Ascending aorta (tissue), 2 donors: ENCODE measurements at regions of chr6 and their contacts with region 1.

Region 1: GRCh38 chr6:160455541-160456213 is 107.5 kb downstream of the SLC22A3 start:
- DNase-seq: peak in 1 of 2 donors; percentile 81
- H3K4me3 ChIP-seq: peak overlapping the region in 1 of 2 donors; percentile 10
- H3K27ac ChIP-seq: peak overlapping the region; percentile 32 to 51
- H3K4me1 ChIP-seq: peaks cover 0 to 8% of the 10 kb centered on the region in 2 donors
- H3K27me3 ChIP-seq: no peaks in the 10 kb centered on the region
- CTCF ChIP-seq: peak; percentile 95 to 98 (median 95)

Region 2: DNA sequence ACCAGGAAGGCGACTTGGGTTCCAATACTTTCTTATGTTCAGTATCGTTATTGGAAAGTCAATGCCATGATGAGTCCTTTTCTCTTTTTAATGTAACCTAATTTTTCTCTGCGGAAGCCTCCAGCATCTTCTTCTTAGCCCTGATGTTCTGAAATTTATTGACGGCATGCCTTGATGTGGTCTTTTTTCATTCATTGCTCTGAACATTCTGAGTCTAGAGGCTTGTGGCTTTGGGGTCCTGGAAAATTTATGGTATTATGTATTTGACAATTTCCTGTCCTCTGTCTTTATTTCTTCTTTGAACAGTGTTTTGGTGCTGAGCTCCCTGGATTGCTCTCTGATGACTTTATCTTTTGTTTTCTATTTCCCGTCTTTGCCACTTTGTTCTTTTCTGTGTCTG is 593.6 kb before region 1 on chr6:
- intact Hi-C with region 1: loop called (anchors 10 kb)
- DNase-seq: no peak
- H3K4me3 ChIP-seq: no peak overlapping the region
- H3K27ac ChIP-seq: no peak overlapping the region
- H3K4me1 ChIP-seq: no peaks in the 10 kb centered on the region
- H3K27me3 ChIP-seq: no peaks in the 10 kb centered on the region
- CTCF ChIP-seq: no peak

Region 3: GRCh38 chr6:159968440-159969203 is 487.1 kb before region 1 on chr6 and contains the start of gene IGF2R:
- intact Hi-C with region 1: loop called (anchors 5 kb)
- DNase-seq: peak; percentile 89 to 97
- H3K4me3 ChIP-seq: peak within 1 kb of the TSS; percentile 100
- H3K27ac ChIP-seq: peak within 1 kb of the TSS; percentile 86 to 90
- H3K4me1 ChIP-seq: peaks cover 0 to 15% of the 10 kb centered on the region in 2 donors
- H3K27me3 ChIP-seq: no peaks in the 10 kb centered on the region
- CTCF ChIP-seq: no peak
- total RNA-seq, gene IGF2R: 104 TPM

Region 4: DNA sequence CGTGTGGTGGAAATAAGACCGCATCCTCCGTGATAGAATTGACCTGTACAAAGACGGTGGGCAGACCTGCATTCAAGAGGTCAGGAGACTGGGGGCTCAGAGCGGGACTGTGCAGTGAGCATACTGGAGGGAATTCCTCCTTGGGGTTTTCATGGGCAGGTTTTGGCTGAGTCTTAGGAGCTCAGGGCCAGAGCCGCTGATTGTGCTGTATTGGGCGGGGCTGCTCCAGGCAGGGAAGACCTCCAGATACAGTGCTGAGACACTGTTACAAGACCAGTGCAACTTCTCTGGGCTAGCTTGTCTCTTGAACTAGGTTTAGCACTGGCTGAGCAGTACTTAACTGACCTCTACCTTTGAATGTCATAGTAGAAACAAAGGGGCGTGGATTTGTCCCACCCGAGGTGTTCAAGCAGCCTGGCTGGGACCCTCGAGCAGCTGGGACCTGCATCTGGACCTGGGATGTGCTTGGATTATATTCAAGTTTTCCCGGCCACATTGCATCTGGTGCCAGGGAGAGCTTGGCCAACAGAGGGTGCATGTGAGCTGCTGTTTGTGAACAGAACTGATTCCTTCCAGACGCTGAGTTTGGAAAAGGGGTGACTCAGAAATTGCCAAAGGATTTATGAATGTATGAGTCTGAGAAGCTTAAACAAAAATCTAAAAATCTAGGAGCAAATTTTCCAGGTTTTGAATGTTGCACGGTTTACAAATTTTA is 367.5 kb before region 1 on chr6:
- intact Hi-C with region 1: loop called (anchors 1 kb)
- DNase-seq: peak in 1 of 2 donors; percentile 89
- H3K4me3 ChIP-seq: no peak overlapping the region
- H3K27ac ChIP-seq: peak overlapping the region in 1 of 2 donors; percentile 68
- H3K4me1 ChIP-seq: peaks cover 4 to 5% of the 10 kb centered on the region in 2 donors
- H3K27me3 ChIP-seq: no peaks in the 10 kb centered on the region
- CTCF ChIP-seq: peak; percentile 75 to 82 (median 82)

Region 5: DNA sequence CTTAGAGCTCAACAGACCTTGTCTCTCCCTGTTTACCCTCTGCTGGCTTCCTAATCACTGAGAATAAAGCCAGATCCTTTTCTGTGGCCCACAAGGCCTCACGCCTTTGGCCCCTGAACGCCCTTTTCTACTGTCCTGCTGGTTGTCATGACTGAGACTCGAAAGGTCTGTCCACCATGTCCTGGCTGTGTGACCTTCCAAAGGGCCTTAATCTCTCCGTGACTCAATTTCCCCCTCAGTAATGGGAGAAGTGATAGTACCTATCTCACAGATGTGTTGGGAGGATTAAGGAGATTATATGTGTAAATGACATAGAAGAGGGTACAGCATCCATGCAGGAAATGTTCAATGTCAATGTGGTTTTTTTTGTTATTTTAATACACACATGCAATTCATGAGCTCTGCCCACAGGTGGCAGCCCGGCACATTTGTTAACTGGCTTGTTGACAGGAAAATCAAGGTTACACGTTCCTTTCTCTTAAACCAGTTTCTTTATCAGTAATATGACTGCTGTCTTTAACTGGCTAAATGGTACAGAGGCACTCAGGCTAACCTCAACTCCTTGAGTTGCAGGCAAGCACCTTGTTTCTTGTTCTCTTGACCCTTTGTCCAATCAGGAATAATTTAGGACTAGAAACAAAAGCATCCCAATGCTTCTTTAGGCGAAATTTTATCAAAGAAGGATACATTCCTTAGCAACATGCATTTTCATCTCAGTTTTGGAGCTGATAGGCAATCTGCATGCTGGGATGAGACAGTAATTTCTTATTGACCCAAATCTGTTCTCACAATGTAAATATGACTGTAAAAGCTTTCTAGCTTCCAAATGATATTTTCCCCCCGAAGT is 317.5 kb before region 1 on chr6:
- intact Hi-C with region 1: loop called (anchors 1 kb)
- DNase-seq: peak in 1 of 2 donors; percentile 71
- H3K4me3 ChIP-seq: no peak overlapping the region
- H3K27ac ChIP-seq: peak overlapping the region; percentile 90 to 91
- H3K4me1 ChIP-seq: peaks cover 18 to 34% of the 10 kb centered on the region in 2 donors
- H3K27me3 ChIP-seq: no peaks in the 10 kb centered on the region
- CTCF ChIP-seq: peak; percentile 66 to 75 (median 66)

Region 6: DNA sequence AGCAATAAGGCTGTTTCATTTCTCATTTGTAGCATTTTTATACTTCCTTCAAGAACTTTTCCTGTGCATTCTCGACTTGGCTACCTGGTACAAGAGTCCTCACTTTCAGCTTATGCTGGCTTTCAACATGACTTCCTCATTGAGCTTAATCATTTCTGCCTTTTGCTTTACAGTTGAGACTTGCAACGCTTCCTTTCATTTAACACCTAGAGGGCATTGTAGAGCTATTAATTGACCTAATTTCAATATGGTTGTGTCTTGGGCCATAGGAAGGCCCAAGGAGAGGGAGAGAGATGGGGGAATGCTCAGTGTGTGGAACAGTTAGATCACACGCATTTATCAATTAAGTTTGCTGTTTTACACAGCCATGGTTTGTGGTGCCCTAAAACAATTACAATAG is 234.3 kb before region 1 on chr6:
- intact Hi-C with region 1: loop called (anchors 2 kb)
- DNase-seq: no peak
- H3K4me3 ChIP-seq: no peak overlapping the region
- H3K27ac ChIP-seq: no peak overlapping the region
- H3K4me1 ChIP-seq: peaks cover 0 to 11% of the 10 kb centered on the region in 2 donors
- H3K27me3 ChIP-seq: no peaks in the 10 kb centered on the region
- CTCF ChIP-seq: peak in 1 of 3 experiments; percentile 9

Region 7: DNA sequence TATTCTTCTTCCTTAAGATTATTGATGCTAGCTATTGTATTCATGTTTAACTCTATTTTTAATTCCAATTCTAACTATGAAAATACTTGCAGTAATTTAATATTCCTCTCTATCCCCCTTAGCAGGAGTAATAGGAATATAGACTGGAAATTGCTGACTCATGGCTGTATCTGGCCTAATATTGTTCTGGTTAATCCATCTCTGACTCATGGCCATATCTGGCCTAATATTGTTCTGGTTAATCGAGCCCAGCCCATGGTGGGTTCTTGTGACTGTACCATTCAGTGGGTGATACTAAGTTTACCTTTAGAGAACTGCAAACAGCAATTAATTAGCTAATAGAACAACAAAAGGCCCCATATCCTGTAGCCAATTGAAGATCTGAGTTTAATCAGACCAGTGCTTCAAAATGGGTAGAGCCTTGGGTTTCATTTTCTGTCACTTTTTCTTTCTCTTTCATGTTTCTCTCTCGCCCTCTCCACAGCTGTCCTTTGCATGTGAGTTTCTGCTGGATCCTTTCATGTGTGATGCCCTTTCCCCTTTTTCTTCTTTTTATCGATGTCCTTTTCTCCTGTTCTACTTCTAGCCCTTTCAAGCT is 56.9 kb before region 1 on chr6:
- intact Hi-C with region 1: loop called (anchors 5 kb)
- DNase-seq: no peak
- H3K4me3 ChIP-seq: no peak overlapping the region
- H3K27ac ChIP-seq: peak overlapping the region; percentile 87 to 94
- H3K4me1 ChIP-seq: peaks cover 3 to 62% of the 10 kb centered on the region in 2 donors
- H3K27me3 ChIP-seq: no peaks in the 10 kb centered on the region
- CTCF ChIP-seq: no peak